GM10248 (cell line): ENCODE measurements at regions of chr22 and their contacts with region 1.

Region 1: GRCh38 chr22:29524440-29525191 is 28.9 kb downstream of the THOC5 start:
- DNase-seq: peak; percentile 52
- CTCF ChIP-seq: peak; percentile 46

Region 2: GRCh38 chr22:29394931-29395581 is 129.6 kb before region 1 on chr22:
- CTCF ChIA-PET with region 1: interaction called, 20 read pairs
- POLR2A ChIA-PET with region 1: no interaction called
- DNase-seq: peak; percentile 81
- CTCF ChIP-seq: peak; percentile 87

Region 3: GRCh38 chr22:29512031-29512430 is 12.6 kb before region 1 on chr22:
- CTCF ChIA-PET with region 1: interaction called, 22 read pairs
- POLR2A ChIA-PET with region 1: no interaction called
- DNase-seq: no peak
- CTCF ChIP-seq: no peak

Region 4: GRCh38 chr22:29744902-29745301 is 220.3 kb after region 1 on chr22:
- CTCF ChIA-PET with region 1: no interaction called
- POLR2A ChIA-PET with region 1: no interaction called
- DNase-seq: no peak
- CTCF ChIP-seq: no peak